Activated CD4-positive, alpha-beta T cell treated with anti-CD3 and anti-CD28 coated beads for 36 hours (primary cell): ENCODE measurements at regions of chr17 and their contacts with region 1.

Region 1: DNA sequence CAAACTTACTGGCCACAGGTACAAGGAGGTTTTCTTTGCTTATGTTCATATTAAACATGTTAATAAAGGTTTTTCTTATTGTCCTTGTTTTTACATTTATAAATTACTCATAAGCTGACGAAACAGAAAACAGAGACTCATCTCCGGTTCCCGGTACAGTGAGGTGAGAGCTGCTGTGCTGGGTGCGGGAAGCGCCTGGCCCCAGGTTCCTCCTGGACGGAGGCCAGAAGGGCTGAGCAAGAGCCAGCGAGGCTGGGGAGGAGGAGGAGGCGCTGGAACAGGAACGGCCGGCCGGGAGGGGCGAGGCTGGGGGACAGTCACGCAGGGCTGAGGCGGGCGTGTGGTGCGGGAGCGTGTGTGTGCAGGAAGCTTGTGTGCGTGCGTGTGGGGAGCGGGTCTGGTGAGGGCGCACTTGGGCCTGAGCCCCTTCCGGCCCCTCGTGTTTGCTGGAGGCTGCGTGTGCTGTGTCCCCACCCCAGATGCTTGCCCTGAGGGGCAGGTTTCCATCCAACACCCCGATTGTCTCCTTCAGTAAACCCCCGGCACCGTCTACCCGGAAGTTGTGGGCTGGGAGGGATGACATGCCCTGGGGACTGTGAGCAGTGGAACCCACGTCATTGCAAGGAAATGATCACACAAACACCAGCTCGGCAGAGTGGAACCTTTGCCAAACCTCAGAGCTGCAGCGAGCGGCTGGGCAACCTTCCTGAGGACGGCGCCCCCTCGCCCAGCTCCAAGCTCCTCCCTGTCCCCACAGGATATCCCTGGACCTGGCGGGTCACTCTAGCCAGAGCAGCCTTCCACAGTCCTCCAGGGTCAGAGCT is 19.5 kb downstream of the CD7 start:
- DNase-seq: peak; percentile 96
- ATAC-seq: peak; percentile 62
- H3K4me3 Mint-ChIP-seq: peak overlapping the region; percentile 80
- H3K27ac Mint-ChIP-seq: peak overlapping the region; percentile 100
- H3K4me1 Mint-ChIP-seq: peaks cover 70% of the 10 kb centered on the region
- H3K27me3 Mint-ChIP-seq: no peaks in the 10 kb centered on the region

Region 2: DNA sequence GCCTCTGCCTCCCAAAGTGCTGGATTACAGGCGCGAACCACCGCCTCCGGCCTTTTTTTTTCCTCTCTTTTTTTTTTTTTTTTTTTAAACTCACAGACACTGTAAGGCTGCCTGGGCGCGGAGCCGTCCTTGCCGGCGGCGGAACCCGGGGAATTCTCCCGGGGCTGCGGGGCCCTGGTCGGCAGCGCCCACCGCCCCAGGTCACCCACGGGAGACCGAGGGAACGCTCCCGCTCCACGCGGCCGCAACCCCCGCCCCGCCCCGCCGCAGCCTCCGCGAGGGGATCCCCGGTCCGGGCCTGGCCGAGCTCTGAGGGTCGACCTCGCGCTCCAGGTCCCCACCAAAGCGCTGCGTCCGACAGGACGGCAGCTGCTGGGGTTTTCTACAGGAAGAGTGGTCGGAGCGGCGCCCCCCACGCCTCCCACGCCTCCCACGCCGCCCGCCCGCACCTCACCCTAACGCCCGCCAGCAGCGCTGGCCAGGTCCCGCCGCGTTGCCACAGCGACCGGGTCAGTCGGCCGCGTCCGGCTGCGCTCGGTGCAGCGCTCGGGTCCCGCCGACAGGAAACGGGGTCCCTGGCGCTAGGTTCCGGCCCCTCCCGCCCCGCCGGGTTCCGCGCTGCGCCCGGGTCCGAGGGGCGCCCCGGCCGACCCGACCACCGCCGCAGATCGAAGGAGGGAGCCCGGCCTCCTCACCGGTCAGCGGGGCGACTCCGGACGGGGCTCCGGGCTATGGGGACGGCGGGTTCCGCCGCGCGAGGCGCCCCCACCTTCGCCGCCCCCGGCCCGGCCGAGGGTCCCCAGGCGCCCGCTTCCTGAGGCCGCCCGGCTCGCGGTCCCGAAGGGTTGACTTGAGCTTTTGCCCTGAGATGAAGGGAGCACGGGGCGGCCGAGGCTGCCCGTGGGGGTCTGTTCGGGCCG is 85.3 kb before region 1 on chr17 and contains the start of gene CCDC57:
- CTCF ChIA-PET with region 1: no interaction called
- POLR2A ChIA-PET with region 1: no interaction called
- intact Hi-C with region 1: loop called in 1 of 2 experiments (anchors 2 kb)
- DNase-seq: peak; percentile 88
- ATAC-seq: peak; percentile 67
- H3K4me3 Mint-ChIP-seq: peak within 1 kb of the TSS; percentile 76
- H3K27ac Mint-ChIP-seq: peak within 1 kb of the TSS; percentile 66
- H3K4me1 Mint-ChIP-seq: peaks cover 39% of the 10 kb centered on the region
- H3K27me3 Mint-ChIP-seq: no peaks in the 10 kb centered on the region
- total RNA-seq, gene CCDC57: 41.6 to 43.8 TPM

Region 3: GRCh38 chr17:82236142-82236981 is 61.6 kb before region 1 on chr17:
- CTCF ChIA-PET with region 1: interaction called, 3 read pairs
- POLR2A ChIA-PET with region 1: interaction called, 10 read pairs
- intact Hi-C with region 1: no loop called
- DNase-seq: peak; percentile 85
- ATAC-seq: peak; percentile 25
- H3K4me3 Mint-ChIP-seq: no peak overlapping the region
- H3K27ac Mint-ChIP-seq: no peak overlapping the region
- H3K4me1 Mint-ChIP-seq: peaks cover 46% of the 10 kb centered on the region
- H3K27me3 Mint-ChIP-seq: no peaks in the 10 kb centered on the region

Region 4: DNA sequence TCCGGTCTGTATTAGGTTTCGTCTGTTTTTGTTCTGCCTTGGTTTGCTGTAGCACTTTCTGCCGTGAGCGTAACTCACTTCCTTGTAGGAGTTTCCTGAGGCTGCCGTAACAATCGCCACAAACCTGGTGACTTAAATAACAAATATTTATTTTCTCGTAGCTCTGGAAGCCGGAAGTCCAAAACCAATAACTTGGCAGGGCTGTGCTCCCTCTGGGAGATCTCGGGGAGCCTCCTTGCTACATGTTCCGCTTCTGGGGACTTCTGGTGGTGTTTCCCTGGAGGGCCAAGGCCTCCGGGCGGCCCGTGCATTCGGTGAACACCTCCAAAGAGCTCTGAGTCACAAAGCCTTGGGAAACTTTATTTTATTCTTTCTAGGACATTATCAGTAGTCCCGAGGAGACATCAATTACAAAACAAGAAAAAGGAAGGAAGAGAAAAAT is 357.1 kb after region 1 on chr17:
- CTCF ChIA-PET with region 1: no interaction called
- POLR2A ChIA-PET with region 1: no interaction called
- intact Hi-C with region 1: no loop called
- DNase-seq: no peak
- ATAC-seq: no peak
- H3K4me3 Mint-ChIP-seq: no peak overlapping the region
- H3K27ac Mint-ChIP-seq: no peak overlapping the region
- H3K4me1 Mint-ChIP-seq: no peaks in the 10 kb centered on the region
- H3K27me3 Mint-ChIP-seq: no peaks in the 10 kb centered on the region